Activated naive CD4-positive, alpha-beta T cell treated with anti-CD3 and anti-CD28 coated beads for 36 hours (primary cell): ENCODE measurements at regions of chr11 and their contacts with region 1.

Region 1: DNA sequence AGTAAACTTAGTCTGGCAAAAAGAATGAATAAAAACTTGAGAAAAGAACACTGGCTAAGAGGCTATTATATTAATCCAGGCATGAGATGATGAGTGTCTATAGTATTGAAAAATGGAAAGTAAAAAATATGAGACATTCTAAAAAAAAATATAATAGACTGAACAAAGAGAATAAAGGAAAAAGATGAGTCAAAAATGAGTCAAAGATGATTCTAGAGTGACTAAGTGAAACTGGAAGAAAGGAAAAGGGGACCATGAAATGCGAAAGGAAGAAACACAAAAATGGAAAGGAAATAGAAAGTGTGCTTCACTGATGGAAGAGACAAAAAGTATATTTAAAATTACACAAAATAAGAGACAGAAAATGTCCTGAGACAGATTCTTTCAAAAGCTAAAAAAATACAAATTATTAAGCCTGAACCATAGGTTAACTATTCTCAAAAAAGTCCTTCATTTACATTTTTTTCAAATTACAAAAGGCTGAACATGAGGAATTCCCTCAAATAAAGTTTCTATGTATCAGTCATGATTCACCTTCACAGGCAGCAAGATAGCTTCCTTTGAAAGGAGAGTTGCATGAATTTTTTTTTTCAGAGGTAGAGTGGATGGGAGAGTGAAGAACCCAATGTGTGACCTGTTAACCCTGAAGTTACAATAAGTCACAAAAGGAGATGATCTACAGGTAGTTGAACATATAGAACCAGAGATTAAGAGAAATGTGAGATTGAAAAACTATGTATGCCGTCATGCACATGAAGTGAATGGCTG is 75.2 kb downstream of the EIF3M start:
- DNase-seq: no peak
- H3K4me3 Mint-ChIP-seq: no peak overlapping the region
- H3K27ac Mint-ChIP-seq: no peak overlapping the region
- H3K4me1 Mint-ChIP-seq: peaks cover 13% of the 10 kb centered on the region
- H3K27me3 Mint-ChIP-seq: peaks cover 11% of the 10 kb centered on the region

Region 2: DNA sequence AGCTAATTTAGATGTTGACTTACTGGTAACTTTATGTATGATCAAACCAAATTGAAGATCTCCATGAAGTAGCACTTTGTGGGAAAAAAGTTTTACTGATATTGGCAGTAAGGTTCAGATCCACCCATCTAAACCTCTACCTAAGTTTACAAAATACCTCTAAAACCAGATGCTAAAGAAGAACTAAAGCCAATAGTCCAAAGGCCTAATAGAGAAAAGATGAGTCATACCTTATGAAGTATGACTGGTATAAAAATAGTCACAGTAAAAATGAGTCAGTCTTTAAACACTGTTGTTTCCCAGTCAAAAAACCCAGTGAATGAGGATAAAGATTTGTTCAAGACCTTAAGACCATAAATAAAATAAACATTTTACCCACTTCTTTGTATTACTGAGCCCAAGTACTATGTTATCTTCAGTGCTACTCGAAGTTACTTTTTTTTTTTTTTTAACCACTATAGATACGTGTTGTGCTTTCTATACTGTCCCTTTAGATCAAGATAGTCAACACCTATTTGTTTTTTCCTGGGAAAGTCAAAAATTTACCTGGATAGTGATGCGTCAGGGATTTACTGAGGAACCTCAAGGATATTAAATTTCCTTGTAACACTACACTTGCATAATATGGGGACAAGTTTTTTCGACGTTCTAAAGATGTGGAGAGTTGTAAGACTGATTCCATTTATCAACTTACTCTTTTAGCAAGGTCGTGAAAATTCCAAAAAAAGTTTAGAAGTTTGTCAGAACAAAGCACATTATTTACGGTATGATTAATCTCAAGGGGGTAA is 48.3 kb after region 1 on chr11:
- CTCF ChIA-PET with region 1: no interaction called
- intact Hi-C with region 1: loop called (anchors 2 kb)
- DNase-seq: no peak
- H3K4me3 Mint-ChIP-seq: no peak overlapping the region
- H3K27ac Mint-ChIP-seq: no peak overlapping the region
- H3K4me1 Mint-ChIP-seq: peaks cover 18% of the 10 kb centered on the region
- H3K27me3 Mint-ChIP-seq: peaks cover 22% of the 10 kb centered on the region